ENCODE measurements at regions of chr12 and their contacts with region 1.

Region 1: GRCh38 chr12:76083904-76084862 is at the start of gene NAP1L1:
- DNase-seq: peak; percentile 97 to 98
- ATAC-seq: peak; percentile 95 to 97 (median 95)
- H3K4me3 ChIP-seq: peak within 1 kb of the TSS; percentile 83
- H3K27ac ChIP-seq: peak within 1 kb of the TSS; percentile 93
- H3K4me1 ChIP-seq: peaks cover 13% of the 10 kb centered on the region
- H3K27me3 ChIP-seq: no peaks in the 10 kb centered on the region
- CTCF ChIP-seq: no peak
- total RNA-seq, gene NAP1L1: 245 to 341 (median 291) TPM

Region 2: GRCh38 chr12:75908961-75909605 is 175.1 kb before region 1 on chr12:
- intact Hi-C with region 1: no loop called
- DNase-seq: peak; percentile 57 to 72
- ATAC-seq: peak in 3 of 4 donors; percentile 60 to 81 (median 67)
- H3K4me3 ChIP-seq: no peak overlapping the region
- H3K27ac ChIP-seq: no peak overlapping the region
- H3K4me1 ChIP-seq: peaks cover 21% of the 10 kb centered on the region
- H3K27me3 ChIP-seq: no peaks in the 10 kb centered on the region
- CTCF ChIP-seq: no peak

Region 3: GRCh38 chr12:75986001-75986746 is 98.0 kb before region 1 on chr12:
- intact Hi-C with region 1: no loop called
- DNase-seq: no peak
- ATAC-seq: no peak
- H3K4me3 ChIP-seq: no peak overlapping the region
- H3K27ac ChIP-seq: no peak overlapping the region
- H3K4me1 ChIP-seq: no peaks in the 10 kb centered on the region
- H3K27me3 ChIP-seq: no peaks in the 10 kb centered on the region
- CTCF ChIP-seq: no peak

Region 4: GRCh38 chr12:76031537-76032073 is 52.6 kb before region 1 on chr12 and contains the start of gene PHLDA1:
- intact Hi-C with region 1: no loop called
- DNase-seq: peak; percentile 95 to 96
- ATAC-seq: peak; percentile 83 to 94 (median 88)
- H3K4me3 ChIP-seq: peak within 1 kb of the TSS; percentile 84
- H3K27ac ChIP-seq: peak within 1 kb of the TSS; percentile 88
- H3K4me1 ChIP-seq: peaks cover 6% of the 10 kb centered on the region
- H3K27me3 ChIP-seq: peaks cover 0 to 36% (median 3%) of the 10 kb centered on the region in 3 donors
- CTCF ChIP-seq: peak; percentile 53
- total RNA-seq, gene PHLDA1: 2.2 to 3.7 (median 3.1) TPM

Region 5: DNA sequence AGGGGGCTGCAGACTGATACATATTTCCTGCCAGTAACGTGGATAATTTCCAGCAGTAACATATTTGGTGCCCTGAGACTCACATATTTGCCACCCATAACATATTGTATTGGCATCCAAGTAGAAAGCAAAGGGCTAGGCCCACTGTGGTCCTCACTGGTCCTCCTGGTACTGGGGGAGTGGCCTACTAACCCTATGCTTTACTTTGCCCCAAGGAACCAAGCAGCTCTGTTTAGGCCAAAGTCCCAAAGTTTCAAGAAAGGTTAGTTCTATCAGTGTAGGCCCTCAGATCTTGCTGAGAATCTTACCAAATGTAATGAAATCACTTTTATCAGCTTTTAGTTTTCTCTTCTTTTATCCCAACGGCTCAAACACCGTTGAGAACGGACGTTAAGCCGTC is 35.7 kb after region 1 on chr12:
- intact Hi-C with region 1: loop called in 1 of 2 experiments (anchors 2 kb)
- DNase-seq: no peak
- ATAC-seq: peak in 1 of 4 donors; percentile 26
- H3K4me3 ChIP-seq: no peak overlapping the region
- H3K27ac ChIP-seq: no peak overlapping the region
- H3K4me1 ChIP-seq: no peaks in the 10 kb centered on the region
- H3K27me3 ChIP-seq: no peaks in the 10 kb centered on the region
- CTCF ChIP-seq: no peak

Region 6: DNA sequence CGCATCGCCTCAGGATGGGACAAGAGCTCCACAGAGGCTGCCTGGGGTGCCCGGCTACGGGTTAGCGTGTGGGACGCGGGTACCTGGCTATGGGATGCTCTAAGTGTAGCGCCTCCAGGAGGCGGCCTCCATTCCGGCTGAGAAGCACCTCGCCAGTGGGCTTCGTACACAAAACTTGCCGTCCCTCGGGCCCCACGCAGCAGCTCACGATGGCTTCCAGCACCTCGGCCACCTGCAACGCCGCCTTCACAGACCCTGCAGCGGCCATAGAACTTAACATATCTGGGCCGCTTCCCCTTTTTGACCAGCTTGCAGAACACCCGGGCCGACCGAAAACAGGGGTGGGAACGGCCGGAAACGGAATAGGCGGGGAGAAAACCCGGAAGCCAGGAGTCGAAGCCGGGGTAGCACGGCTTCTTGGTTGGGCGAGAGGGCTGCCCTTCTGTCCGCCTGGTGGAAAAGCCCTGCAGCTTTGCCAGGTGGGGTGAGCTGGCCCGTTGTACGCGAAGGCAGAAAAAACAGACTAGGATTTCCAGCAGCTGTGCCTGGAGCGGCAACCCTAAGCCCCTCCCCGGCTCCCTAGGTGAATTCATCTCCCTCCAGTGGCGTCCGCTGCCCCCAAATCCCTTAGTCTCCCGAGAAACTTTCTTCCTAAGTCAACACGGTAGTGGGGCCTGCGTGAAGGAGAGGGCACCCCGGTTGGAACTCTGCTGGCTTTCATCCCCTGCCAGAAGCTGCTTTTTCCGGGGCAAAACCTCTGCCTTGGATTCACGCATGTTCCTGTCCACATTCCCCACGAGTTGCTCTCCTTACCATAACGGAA is 264.1 kb after region 1 on chr12 and contains the start of gene BBS10:
- intact Hi-C with region 1: loop called (anchors 5 kb)
- DNase-seq: peak; percentile 92 to 95
- ATAC-seq: peak; percentile 95 to 97 (median 96)
- H3K4me3 ChIP-seq: peak within 1 kb of the TSS; percentile 90
- H3K27ac ChIP-seq: peak within 1 kb of the TSS; percentile 86
- H3K4me1 ChIP-seq: peaks cover 21% of the 10 kb centered on the region
- H3K27me3 ChIP-seq: no peaks in the 10 kb centered on the region
- CTCF ChIP-seq: peak; percentile 36
- total RNA-seq, gene BBS10: 3.9 to 8.2 (median 6.7) TPM

Region 7: DNA sequence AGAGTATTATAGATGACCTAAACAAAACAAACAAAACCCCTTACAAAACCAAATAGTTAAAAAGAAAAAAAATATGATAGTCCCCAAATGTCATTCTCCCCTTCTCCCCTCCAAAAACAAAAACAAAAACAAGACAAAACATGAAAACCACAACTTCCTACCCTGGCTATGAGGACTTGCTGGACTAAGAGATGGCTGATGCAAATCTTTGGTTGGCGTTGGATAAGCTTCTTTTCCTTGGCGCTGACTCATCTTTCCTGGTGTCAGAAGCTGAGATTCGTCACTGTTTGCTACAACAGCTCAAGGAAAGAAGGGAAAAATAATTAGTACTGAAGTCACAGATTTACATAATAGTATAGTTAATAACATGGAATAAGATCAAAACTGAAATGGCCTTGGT is 366.5 kb after region 1 on chr12:
- intact Hi-C with region 1: loop called (anchors 5 to 10 kb)
- DNase-seq: no peak
- ATAC-seq: no peak
- H3K4me3 ChIP-seq: no peak overlapping the region
- H3K27ac ChIP-seq: no peak overlapping the region
- H3K4me1 ChIP-seq: peaks cover 17% of the 10 kb centered on the region
- H3K27me3 ChIP-seq: no peaks in the 10 kb centered on the region
- CTCF ChIP-seq: no peak

Region 8: DNA sequence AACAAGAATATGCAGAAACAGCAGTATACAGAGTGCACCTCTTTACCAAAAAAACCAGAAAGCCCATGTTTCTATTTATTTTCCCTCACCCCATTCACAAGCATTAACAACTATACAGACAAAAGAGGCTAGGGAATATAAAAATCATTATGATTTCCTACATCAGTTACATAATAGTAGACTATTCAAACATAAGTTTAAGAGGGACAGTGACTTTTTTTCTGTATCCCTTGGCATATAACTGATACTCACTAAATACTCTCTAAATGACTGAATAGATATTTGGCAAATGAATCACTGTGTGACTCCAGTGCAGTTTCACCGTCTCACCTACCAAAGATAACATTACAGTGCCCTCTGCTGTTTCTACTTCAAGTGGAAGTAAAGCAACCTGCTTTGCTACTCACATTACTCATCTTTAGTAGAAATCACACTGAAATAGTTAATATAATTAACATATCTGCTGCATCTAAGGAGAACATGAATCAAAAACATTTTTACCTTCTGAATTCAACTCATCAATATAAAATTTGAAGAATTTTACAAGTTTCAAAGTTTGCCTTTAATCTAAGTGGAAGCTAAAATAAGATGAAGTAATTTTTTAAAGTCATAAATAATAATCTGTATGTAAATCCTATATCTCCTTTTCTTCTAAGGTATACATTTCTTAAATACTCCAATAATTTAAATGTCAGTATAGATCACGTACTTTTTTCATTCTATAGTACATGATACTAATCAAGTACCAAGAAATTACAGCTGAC is 371.6 kb after region 1 on chr12:
- intact Hi-C with region 1: loop called (anchors 5 to 10 kb)
- DNase-seq: no peak
- ATAC-seq: peak; percentile 77 to 94 (median 90)
- H3K4me3 ChIP-seq: no peak overlapping the region
- H3K27ac ChIP-seq: peak overlapping the region; percentile 0
- H3K4me1 ChIP-seq: peaks cover 17% of the 10 kb centered on the region
- H3K27me3 ChIP-seq: no peaks in the 10 kb centered on the region
- CTCF ChIP-seq: peak; percentile 63

Region 9: DNA sequence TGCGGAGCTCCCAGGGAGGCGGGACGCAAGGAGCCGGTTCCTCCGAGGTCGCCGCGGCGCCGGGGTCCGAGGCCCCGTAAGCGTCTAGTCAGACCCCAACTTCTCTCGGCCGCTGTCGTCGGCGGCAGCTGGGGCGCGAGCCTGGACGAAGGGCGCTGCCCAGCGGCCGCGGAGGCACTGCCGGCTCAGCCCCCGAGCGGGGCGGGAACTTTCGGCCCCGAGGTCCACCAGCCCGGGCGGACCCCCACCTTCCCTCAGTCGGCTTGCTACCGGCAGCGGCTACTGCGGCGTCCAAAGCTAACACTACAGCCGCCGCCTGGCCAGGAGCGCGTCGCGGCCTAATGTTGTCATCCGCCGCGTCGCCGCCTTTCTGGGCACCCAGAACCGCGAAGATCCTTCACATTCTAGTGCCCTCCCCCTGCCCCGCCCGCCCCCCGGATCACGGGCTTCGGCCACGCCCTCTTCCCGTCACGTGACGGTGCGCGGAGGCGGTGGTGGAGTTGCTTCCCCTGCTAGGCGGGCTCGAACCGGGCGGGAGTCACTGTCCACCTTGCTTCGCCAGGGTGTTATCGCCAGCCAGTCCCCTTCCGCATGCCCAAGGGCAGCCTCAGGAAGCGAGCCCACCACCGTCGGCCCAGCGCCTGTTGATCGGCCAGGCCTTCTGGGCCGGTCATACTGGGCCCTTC is 475.4 kb after region 1 on chr12 and contains the start of gene OSBPL8:
- intact Hi-C with region 1: loop called in 1 of 2 experiments (anchors 10 kb)
- DNase-seq: peak; percentile 97 to 98
- ATAC-seq: peak; percentile 94 to 96 (median 96)
- H3K4me3 ChIP-seq: peak within 1 kb of the TSS; percentile 99
- H3K27ac ChIP-seq: peak within 1 kb of the TSS; percentile 99
- H3K4me1 ChIP-seq: peaks cover 32% of the 10 kb centered on the region
- H3K27me3 ChIP-seq: no peaks in the 10 kb centered on the region
- CTCF ChIP-seq: peak; percentile 27
- total RNA-seq, gene OSBPL8: 39.5 to 64.3 (median 55.4) TPM